Heart right ventricle (tissue), 16 donors: ENCODE measurements at regions of chr3 and their contacts with region 1.

Region 1: DNA sequence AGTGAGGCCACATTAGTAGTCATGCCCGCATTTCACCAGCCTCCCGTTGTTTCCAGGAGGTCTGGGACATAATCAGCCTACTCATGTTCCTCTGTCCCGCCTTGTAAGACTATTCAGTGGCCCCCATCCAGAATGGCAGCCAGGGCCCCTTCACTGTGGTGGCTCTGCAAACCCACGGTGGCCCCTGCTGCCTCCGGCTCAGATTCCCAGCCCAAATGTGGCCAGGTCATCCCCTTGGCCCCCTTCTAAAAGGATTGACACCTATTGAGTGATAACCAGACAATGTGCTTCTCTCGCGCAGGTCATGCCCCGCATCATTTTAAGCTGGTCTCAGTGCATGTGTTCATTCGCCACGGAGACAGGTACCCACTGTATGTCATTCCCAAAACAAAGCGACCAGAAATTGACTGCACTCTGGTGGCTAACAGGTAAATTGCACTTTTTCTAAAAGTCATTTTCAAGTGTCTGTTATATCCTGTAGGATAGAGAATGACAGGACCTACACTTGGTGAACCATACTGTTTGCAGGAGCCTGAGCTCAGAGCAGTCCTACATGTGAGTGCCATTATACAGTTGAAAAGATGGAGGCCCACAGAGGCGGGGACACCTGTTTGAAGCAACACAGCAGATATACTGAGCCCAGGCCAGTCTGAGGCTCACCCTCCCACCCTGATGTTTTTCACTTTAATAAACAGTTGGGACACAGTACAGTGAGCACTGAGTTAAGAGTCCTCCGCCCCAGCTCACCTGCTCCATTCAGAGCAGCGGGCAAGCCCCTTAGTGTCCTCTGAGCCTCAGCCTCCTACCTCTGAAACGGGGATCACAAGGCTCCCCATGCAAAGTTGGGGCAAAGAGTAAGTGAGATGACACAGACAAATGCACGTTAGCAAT is 47.7 kb downstream of the PXYLP1 start:
- DNase-seq: no peak
- ATAC-seq: peak; percentile 47 to 73 (median 64)
- H3K4me3 ChIP-seq: no peak overlapping the region
- H3K27ac ChIP-seq: peak overlapping the region in 5 of 10 donors; percentile 37 to 75 (median 42)
- H3K4me1 ChIP-seq: peaks cover 0 to 35% (median 22%) of the 10 kb centered on the region in 9 donors
- H3K27me3 ChIP-seq: no peaks in the 10 kb centered on the region
- CTCF ChIP-seq: peak; percentile 39 to 69 (median 60)

Region 2: GRCh38 chr3:141231101-141231935 is 48.0 kb before region 1 on chr3 and contains the start of gene PXYLP1:
- intact Hi-C with region 1: loop called in 9 of 10 experiments (anchors 1 to 5 kb)
- DNase-seq: peak; percentile 93 to 96
- ATAC-seq: peak; percentile 94 to 98 (median 96)
- H3K4me3 ChIP-seq: peak within 1 kb of the TSS; percentile 83 to 97 (median 88)
- H3K27ac ChIP-seq: peak within 1 kb of the TSS; percentile 56 to 95 (median 92)
- H3K4me1 ChIP-seq: peaks cover 2 to 34% (median 20%) of the 10 kb centered on the region in 9 donors
- H3K27me3 ChIP-seq: no peaks in the 10 kb centered on the region
- CTCF ChIP-seq: peak; percentile 56 to 92 (median 75)
- total RNA-seq, gene PXYLP1: 8.7 to 33.5 (median 19.9) TPM

Region 3: DNA sequence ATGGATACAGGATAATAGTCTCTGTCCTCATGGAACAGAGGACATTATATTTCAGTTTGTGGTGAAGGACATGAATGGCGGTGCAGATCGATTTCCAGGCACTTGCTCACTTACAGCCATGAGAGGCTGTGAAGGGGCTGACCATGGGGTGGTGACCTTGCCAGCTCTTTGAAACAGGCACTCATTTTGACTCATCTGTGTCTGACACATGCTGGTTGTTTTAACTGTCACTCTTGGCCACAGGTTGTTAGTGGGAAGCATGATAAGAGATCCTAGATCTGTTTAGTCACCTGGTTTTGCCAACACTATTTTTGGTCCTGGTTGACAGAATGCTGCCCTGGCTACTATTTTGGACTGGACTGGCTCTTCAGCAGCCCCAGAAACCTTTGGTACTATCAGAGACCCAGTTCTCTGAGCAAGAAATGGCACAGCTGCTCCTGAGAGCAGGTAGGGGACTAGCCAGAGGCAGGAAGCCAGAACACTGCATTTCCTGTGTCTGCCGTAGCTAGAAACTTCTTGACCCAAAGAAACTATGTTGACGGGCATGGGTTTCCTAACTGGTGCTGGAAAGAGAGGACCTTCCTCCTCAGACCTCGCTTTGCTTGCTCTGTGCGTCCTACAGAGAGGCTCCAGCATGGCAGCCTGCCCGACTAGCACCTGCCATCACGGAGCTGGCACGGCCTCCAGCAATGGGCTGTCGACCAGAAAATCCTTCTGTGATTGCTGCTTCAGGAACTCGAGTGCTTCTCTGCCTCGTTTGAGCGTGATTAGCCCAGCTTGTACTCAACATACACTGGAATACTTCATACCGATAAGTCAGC is 41.4 kb before region 1 on chr3:
- intact Hi-C with region 1: loop called in 6 of 10 experiments (anchors 2 to 5 kb)
- DNase-seq: peak; percentile 74 to 76
- ATAC-seq: peak; percentile 36 to 65 (median 58)
- H3K4me3 ChIP-seq: no peak overlapping the region
- H3K27ac ChIP-seq: peak overlapping the region; percentile 59 to 88 (median 80)
- H3K4me1 ChIP-seq: peaks cover 9 to 74% (median 59%) of the 10 kb centered on the region in 9 donors
- H3K27me3 ChIP-seq: no peaks in the 10 kb centered on the region
- CTCF ChIP-seq: no peak

Region 4: DNA sequence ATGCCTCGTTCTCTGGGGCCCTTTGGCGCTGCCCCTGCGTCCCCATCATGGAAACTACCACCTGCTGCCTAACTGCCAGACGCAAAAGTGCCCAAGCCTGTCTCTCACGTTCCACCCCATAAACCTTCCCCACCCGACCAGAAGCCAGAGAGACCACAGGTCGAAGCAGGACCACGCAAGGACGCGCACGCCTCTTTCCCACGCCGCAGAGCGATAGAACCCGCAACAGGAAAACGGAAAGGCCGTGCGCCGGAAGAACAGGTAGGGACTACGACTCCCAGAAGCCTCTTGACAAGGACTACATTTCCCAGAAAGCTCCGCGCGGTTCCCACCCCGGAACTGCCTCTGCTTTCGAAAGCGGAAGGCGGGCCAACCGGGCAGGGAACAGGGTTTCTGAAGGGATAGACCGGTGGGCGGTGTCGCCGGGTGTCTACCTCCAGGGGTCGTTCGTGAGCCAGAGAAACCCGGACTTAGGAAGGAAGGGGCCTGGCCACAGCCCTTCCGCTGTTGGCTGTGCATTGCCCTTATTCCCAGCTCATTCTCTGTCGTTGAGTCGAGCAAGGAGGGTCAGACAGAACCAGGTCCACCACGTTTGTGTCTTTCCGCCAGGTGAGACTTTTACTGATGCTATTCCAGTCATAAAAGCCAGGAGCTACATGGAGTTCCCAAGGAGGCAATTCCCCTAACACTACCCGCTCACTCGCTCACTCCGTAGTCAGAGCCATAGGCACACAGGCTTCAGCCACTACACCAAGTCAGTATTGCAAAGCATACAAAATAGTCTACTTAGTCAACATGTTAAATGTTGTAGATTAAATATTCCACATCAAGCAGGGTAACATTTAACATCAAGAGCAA is 32.4 kb after region 1 on chr3:
- intact Hi-C with region 1: no loop called
- DNase-seq: peak; percentile 98 to 99
- ATAC-seq: peak; percentile 97 to 100 (median 99)
- H3K4me3 ChIP-seq: peak overlapping the region; percentile 42 to 79 (median 72)
- H3K27ac ChIP-seq: peak overlapping the region; percentile 19 to 89 (median 86)
- H3K4me1 ChIP-seq: peaks cover 4 to 26% (median 16%) of the 10 kb centered on the region in 9 donors
- H3K27me3 ChIP-seq: no peaks in the 10 kb centered on the region
- CTCF ChIP-seq: peak; percentile 57 to 93 (median 80)